OCI-LY7 (cell line): ENCODE measurements at regions of chr7 and their contacts with region 1.

Region 1: DNA sequence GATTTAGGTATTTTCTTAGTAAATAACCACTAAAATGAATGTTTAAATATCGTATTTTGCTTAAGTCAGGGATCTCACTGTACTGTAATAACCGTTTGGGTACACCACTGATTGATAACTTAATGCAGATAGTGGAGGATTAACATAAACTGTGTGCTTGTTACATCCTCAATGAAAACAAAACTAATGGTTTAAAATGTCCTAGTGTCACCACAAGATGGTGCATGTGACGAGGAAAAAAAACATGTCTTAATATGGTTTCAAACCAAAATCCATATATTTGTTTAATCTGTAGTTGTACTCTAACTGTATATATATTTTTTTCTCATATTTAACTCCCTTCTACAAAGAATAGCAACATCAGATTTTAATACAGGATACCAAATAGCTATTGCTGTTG is 19.2 kb downstream of the ARMC10 start:
- DNase-seq: no peak
- H3K4me3 ChIP-seq: no peak overlapping the region
- H3K27ac ChIP-seq: no peak overlapping the region
- H3K4me1 ChIP-seq: no peaks in the 10 kb centered on the region
- CTCF ChIP-seq: peak; percentile 57

Region 2: DNA sequence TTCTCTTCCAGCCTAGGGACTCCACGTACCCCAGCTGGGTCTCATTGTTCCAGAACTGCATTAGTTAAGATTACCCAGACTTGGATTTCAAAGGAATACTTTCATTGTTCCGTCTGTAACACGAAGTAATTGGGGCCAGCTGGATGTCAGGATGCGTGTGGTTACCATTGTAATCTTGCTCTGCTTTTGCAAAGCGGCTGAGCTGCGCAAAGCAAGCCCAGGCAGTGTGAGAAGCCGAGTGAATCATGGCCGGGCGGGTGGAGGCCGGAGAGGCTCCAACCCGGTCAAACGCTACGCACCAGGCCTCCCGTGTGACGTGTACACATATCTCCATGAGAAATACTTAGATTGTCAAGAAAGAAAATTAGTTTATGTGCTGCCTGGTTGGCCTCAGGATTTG is 160.3 kb before region 1 on chr7:
- CTCF ChIA-PET with region 1: no interaction called
- POLR2A ChIA-PET with region 1: no interaction called
- intact Hi-C with region 1: no loop called
- DNase-seq: no peak
- H3K4me3 ChIP-seq: no peak overlapping the region
- H3K27ac ChIP-seq: no peak overlapping the region
- H3K4me1 ChIP-seq: no peaks in the 10 kb centered on the region
- CTCF ChIP-seq: no peak

Region 3: GRCh38 chr7:103074519-103075336 is 19.4 kb before region 1 on chr7 and contains the starts of genes ARMC10 and FBXL13:
- CTCF ChIA-PET with region 1: no interaction called
- POLR2A ChIA-PET with region 1: interaction called, 16 read pairs
- intact Hi-C with region 1: no loop called
- DNase-seq: peak; percentile 91
- H3K4me3 ChIP-seq: peak within 1 kb of the TSS; percentile 80
- H3K27ac ChIP-seq: peak within 1 kb of the TSS; percentile 64
- H3K4me1 ChIP-seq: peaks cover 13% of the 10 kb centered on the region
- CTCF ChIP-seq: 0 out of 2 replicates have a peak, but pooled peaks have one; percentile 24
- total RNA-seq, gene ARMC10: 20.9 and 24.3 TPM in 2 replicates
- total RNA-seq, gene FBXL13: 0.41 and 2.0 TPM in 2 replicates